ENCODE measurements at regions of chr4 and their contacts with region 1.

Region 1: DNA sequence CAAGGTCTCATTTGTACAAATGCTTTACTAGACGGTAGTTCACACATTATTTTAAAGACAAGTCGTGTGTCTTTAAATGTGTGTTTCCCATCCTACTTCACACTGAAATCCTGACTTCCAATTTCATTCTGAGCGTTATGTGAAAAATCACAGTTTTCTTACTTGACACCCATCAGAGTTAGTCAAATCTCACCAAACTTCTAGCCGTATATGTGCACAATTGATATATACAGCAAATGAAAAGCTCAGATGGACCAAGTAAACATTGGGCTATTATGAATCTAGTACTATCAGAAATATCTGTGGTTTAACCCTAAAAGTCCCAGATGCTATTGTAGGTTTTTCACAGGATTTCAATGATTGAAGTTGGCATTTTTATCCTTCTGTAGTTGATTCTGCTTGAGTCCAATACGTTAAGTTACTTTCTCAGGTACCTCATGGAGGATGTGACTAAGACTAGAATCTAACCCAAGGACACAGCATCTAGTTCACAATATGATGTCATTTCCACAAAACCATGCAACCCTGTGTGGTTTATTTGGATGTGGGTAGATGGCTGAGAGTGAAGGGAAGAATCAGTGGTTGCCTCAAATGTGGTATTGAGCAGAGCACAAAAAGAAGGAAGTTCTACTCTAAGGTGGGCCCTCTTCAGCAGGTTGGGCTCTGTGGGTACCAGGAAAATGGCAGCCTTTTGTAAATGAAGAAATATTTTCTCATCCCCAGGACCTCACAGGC is 22.1 kb upstream of the TRIM60 start:
- DNase-seq: no peak
- H3K4me3 ChIP-seq: no peak overlapping the region
- H3K4me3 Mint-ChIP-seq: no peak overlapping the region
- H3K27ac Mint-ChIP-seq: no peak overlapping the region
- H3K4me1 ChIP-seq: no peaks in the 10 kb centered on the region
- H3K4me1 Mint-ChIP-seq: no peaks in the 10 kb centered on the region
- H3K27me3 ChIP-seq: no peaks in the 10 kb centered on the region
- H3K27me3 Mint-ChIP-seq: no peaks in the 10 kb centered on the region
- CTCF ChIP-seq: no peak

Region 2: GRCh38 chr4:165096776-165097175 is 87.1 kb after region 1 on chr4:
- CTCF ChIA-PET with region 1: no interaction called
- POLR2A ChIA-PET with region 1: no interaction called
- intact Hi-C with region 1: loop called (anchors 10 kb)
- DNase-seq: peak in 1 of 2 experiments; percentile 18
- H3K4me3 ChIP-seq: no peak overlapping the region
- H3K4me3 Mint-ChIP-seq: no peak overlapping the region
- H3K27ac Mint-ChIP-seq: no peak overlapping the region
- H3K4me1 ChIP-seq: no peaks in the 10 kb centered on the region
- H3K4me1 Mint-ChIP-seq: no peaks in the 10 kb centered on the region
- H3K27me3 ChIP-seq: no peaks in the 10 kb centered on the region
- H3K27me3 Mint-ChIP-seq: no peaks in the 10 kb centered on the region
- CTCF ChIP-seq: peak; percentile 54 to 63

Measured in Caco-2 (cell line).